WTC11 (cell line): ENCODE measurements at regions of chr2 and their contacts with region 1.

Region 1: GRCh38 chr2:219530048-219530963 is 13.3 kb downstream of the CHPF start:
- DNase-seq: peak; percentile 92
- ATAC-seq: peak; percentile 75
- H3K4me3 Mint-ChIP-seq: peak overlapping the region; percentile 60
- H3K27ac Mint-ChIP-seq: no peak overlapping the region
- H3K4me1 Mint-ChIP-seq: peaks cover 30% of the 10 kb centered on the region
- H3K27me3 Mint-ChIP-seq: peaks cover 56% of the 10 kb centered on the region
- CTCF ChIP-seq: peak; percentile 88

Region 2: GRCh38 chr2:219388127-219388844 is 142.0 kb before region 1 on chr2:
- CTCF ChIA-PET with region 1: interaction called, 31 read pairs
- POLR2A ChIA-PET with region 1: interaction called, 6 read pairs
- DNase-seq: peak; percentile 97
- ATAC-seq: peak; percentile 76
- H3K4me3 Mint-ChIP-seq: peak overlapping the region; percentile 76
- H3K27ac Mint-ChIP-seq: no peak overlapping the region; the same call in 1 of the 2 replicates
- H3K4me1 Mint-ChIP-seq: peaks cover 7% of the 10 kb centered on the region
- H3K27me3 Mint-ChIP-seq: 0 out of 2 replicates have a peak, but pooled peaks cover 3% of the 10 kb centered on the region
- CTCF ChIP-seq: no peak

Region 3: DNA sequence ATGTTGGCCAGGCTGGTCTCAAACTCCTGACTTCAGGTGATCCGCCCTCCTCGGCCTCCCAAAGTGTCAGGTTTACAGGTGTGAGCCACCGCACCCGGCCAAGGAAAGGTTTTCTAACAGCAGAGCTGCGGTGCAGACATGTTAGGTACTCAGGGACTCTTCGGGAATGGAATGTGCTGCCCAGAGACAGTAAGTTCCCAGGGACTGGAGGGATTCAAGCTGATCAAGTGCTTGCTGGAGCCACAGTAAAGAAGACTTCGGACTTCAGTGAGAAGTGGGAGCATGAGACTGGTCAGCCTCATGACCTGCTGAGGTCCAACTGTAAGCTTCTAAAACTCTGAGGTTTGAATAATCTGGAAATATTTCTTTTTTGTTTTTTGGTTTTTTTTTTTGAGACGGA is 119.9 kb before region 1 on chr2:
- CTCF ChIA-PET with region 1: interaction called, 178 read pairs
- POLR2A ChIA-PET with region 1: no interaction called
- DNase-seq: no peak
- ATAC-seq: no peak
- H3K4me3 Mint-ChIP-seq: no peak overlapping the region
- H3K27ac Mint-ChIP-seq: no peak overlapping the region
- H3K4me1 Mint-ChIP-seq: peaks cover 4% of the 10 kb centered on the region
- H3K27me3 Mint-ChIP-seq: peaks cover 5% of the 10 kb centered on the region
- CTCF ChIP-seq: no peak

Region 4: DNA sequence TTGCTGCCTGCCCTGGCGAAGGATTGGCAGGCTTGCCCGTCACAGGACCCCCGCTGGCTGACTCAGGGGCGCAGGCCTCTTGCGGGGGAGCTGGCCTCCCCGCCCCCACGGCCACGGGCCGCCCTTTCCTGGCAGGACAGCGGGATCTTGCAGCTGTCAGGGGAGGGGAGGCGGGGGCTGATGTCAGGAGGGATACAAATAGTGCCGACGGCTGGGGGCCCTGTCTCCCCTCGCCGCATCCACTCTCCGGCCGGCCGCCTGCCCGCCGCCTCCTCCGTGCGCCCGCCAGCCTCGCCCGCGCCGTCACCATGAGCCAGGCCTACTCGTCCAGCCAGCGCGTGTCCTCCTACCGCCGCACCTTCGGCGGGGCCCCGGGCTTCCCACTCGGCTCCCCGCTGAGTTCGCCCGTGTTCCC is 112.1 kb before region 1 on chr2 and contains the start of gene DES:
- CTCF ChIA-PET with region 1: interaction called, 20 read pairs
- POLR2A ChIA-PET with region 1: no interaction called
- DNase-seq: no peak
- ATAC-seq: no peak
- H3K4me3 Mint-ChIP-seq: peak within 1 kb of the TSS; percentile 37
- H3K27ac Mint-ChIP-seq: no peak within 1 kb of the TSS
- H3K4me1 Mint-ChIP-seq: peaks cover 28% of the 10 kb centered on the region
- H3K27me3 Mint-ChIP-seq: peaks cover 38% of the 10 kb centered on the region
- CTCF ChIP-seq: no peak
- total RNA-seq, gene DES: 1.6 to 3.5 TPM (median 2.8 TPM) in 3 replicates

Region 5: GRCh38 chr2:219441451-219442255 is 88.7 kb before region 1 on chr2:
- CTCF ChIA-PET with region 1: interaction called, 30 read pairs
- POLR2A ChIA-PET with region 1: no interaction called
- DNase-seq: peak; percentile 62
- ATAC-seq: peak; percentile 60
- H3K4me3 Mint-ChIP-seq: peak overlapping the region; percentile 82
- H3K27ac Mint-ChIP-seq: no peak overlapping the region
- H3K4me1 Mint-ChIP-seq: peaks cover 27% of the 10 kb centered on the region
- H3K27me3 Mint-ChIP-seq: peaks cover 22% of the 10 kb centered on the region
- CTCF ChIP-seq: no peak

Region 6: GRCh38 chr2:219543601-219544358 is 13.5 kb after region 1 on chr2 and contains the starts of genes CHPF and TMEM198:
- CTCF ChIA-PET with region 1: interaction called, 36 read pairs
- POLR2A ChIA-PET with region 1: no interaction called
- DNase-seq: peak; percentile 99
- ATAC-seq: peak; percentile 84
- H3K4me3 Mint-ChIP-seq: peak within 1 kb of the TSS; percentile 86
- H3K27ac Mint-ChIP-seq: no peak within 1 kb of the TSS
- H3K4me1 Mint-ChIP-seq: peaks cover 18% of the 10 kb centered on the region
- H3K27me3 Mint-ChIP-seq: peaks cover 28% of the 10 kb centered on the region
- CTCF ChIP-seq: no peak
- total RNA-seq, gene CHPF: 84.3 to 97.0 TPM (median 84.8 TPM) in 3 replicates
- total RNA-seq, gene TMEM198: 7.1 to 8.1 TPM (median 7.3 TPM) in 3 replicates

Region 7: DNA sequence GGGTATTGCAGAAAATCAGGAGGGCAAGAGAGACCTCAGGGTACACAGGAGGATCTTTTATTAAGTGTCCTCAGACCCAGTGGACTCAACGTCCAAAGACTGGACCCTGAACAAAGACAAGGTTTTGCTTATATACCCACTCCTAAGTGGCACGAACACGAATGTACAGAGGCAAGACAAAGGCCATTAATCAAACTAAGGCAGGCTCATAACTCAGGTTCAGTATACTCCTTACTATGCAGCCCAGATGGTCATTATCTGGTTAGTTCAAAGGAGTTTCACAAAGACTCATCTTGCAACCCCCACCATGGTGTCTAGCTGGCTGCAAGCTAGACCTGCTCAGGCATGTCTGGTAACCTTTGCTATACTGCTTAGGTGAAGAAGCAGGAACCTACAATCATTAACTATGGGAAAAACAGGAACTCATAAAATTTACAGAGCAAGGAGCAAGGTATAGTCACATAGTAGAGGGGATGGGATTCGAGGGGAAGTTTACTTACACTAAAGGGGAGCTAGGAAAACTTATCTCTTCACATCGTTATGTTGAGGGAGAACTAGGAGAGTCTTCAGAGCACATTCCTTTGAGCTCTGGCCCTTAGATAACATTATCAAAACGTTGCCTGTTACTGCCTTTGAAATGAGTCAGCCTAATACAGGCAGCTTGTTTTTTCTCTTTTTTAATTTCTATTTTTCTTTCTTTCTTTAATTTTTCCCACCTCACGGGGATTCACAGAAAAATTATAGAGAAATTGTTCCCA is 131.1 kb after region 1 on chr2:
- CTCF ChIA-PET with region 1: no interaction called
- POLR2A ChIA-PET with region 1: no interaction called
- DNase-seq: no peak
- ATAC-seq: no peak
- H3K4me3 Mint-ChIP-seq: no peak overlapping the region
- H3K27ac Mint-ChIP-seq: no peak overlapping the region
- H3K4me1 Mint-ChIP-seq: peaks cover 16% of the 10 kb centered on the region
- H3K27me3 Mint-ChIP-seq: peaks cover 21% of the 10 kb centered on the region
- CTCF ChIP-seq: no peak